ENCODE measurements at regions of chr19 and their contacts with region 1.

Region 1: DNA sequence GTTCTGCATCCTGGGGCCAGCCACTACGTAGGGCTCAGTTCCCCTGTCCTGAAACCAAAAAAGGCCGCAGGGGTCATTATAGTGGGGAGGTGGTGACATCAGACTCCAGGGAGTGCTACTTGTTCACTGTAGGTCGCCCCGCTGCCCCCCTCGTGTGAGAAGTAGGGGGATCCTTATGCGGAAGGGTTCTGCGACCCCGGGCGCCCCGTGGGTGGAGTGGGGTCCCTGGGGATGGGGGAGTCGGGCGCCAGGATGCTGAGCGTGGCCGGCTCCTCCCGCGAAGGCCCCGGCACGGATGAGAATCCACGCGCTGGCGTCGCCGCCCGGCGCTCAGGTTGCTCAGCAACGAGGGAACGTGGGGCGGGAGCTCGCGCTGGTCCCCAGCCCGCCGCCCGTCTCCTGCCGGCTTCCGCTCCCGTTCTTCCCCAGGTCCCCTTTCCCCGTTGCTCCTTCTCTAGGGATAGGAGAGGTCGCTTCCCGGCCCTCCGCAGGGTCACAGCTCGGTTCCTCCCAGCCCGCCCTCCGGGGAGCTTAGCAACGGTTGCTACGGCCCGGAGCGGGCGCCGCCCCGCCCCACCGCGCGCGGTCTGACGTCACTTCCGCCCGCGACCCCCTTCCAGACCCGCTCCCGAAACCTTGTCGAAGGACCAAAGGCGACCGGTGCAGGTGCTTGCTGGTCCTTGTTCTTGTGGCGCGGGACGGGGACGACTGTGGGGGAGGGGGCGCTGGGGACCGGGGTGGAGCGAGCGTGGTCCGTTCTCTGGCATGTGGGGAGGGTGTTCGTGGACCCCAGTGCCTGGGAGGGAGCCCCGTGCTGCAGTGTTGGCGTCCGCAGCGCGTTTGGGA is at the start of gene NAT14:
- H3K4me3 ChIP-seq: peak within 1 kb of the TSS; percentile 91
- H3K27ac ChIP-seq: peak within 1 kb of the TSS; percentile 59; the same call in 1 of the 2 replicates
- H3K4me1 ChIP-seq: peaks cover 23% of the 10 kb centered on the region
- CTCF ChIP-seq: no peak

Region 2: GRCh38 chr19:55400281-55401087 is 84.3 kb before region 1 on chr19:
- CTCF ChIA-PET with region 1: no interaction called
- POLR2A ChIA-PET with region 1: no interaction called
- H3K4me3 ChIP-seq: no peak overlapping the region
- H3K27ac ChIP-seq: peak overlapping the region; percentile 11; the same call in 1 of the 2 replicates
- H3K4me1 ChIP-seq: no peaks in the 10 kb centered on the region; the same call in 1 of the 2 replicates
- CTCF ChIP-seq: no peak

Region 3: DNA sequence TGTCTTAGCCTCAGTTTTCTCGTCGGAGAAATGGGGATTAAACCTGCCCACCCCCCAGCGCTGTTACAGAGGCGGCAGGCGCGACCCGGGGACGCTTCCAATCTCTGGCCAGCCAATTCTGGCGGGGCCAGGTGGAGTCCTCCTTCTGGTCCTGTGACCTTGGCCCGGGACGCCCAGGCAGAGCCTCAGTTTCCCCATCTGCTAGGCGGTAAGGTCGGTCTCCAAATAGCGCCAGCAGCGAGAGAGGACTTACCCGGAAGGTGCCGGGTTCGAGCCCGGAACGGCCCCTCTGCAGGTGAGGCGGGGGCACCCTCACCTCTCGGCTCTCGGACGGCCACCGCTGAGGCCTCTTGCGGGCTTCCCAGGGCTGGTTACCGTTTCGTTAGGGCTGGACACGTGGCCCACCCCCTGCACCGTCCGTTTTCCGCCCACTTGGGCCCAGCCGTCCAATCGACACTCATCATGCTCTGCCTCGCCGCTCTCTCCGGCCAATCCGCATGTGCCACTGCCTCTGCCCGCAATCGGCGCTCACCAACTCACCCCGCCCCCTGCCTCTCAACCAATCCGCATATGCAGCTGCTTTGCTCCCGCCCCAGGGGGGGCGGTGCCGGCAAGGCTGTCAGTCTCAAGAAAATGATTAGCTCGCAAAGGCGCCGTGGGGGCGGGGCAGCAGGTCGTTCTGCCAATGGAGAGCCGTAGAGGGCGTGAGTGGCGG is 23.4 kb before region 1 on chr19 and contains the start of gene ISOC2:
- CTCF ChIA-PET with region 1: interaction called, 85 read pairs
- POLR2A ChIA-PET with region 1: interaction called, 19 read pairs
- H3K4me3 ChIP-seq: peak within 1 kb of the TSS; percentile 85
- H3K27ac ChIP-seq: peak within 1 kb of the TSS; percentile 56; the same call in 1 of the 2 replicates
- H3K4me1 ChIP-seq: peaks cover 12% of the 10 kb centered on the region
- CTCF ChIP-seq: no peak